ENCODE measurements at regions of chr7 and their contacts with region 1.

Region 1: GRCh38 chr7:151226875-151227782 is at the start of gene ABCF2:
- DNase-seq: peak; percentile 99
- ATAC-seq: peak; percentile 97
- H3K4me3 ChIP-seq: peak within 1 kb of the TSS; percentile 85
- H3K27ac ChIP-seq: peak within 1 kb of the TSS; percentile 92
- H3K4me1 ChIP-seq: peaks cover 11% of the 10 kb centered on the region
- H3K27me3 ChIP-seq: no peaks in the 10 kb centered on the region
- CTCF ChIP-seq: no peak
- POLR2A ChIP-seq: peak; percentile 77
- RAD21 ChIP-seq: no peak
- total RNA-seq, gene ABCF2: 100 and 103 TPM in 2 replicates

Region 2: GRCh38 chr7:151211155-151211772 is 15.9 kb before region 1 on chr7:
- CTCF ChIA-PET with region 1: no interaction called
- POLR2A ChIA-PET with region 1: interaction called, 11 read pairs
- dilution Hi-C with region 1: no loop called
- in situ Hi-C with region 1: no loop called
- intact Hi-C with region 1: no loop called
- DNase-seq: no peak
- ATAC-seq: no peak
- H3K4me3 ChIP-seq: no peak overlapping the region
- H3K27ac ChIP-seq: no peak overlapping the region
- H3K4me1 ChIP-seq: no peaks in the 10 kb centered on the region
- H3K27me3 ChIP-seq: peaks cover 19% of the 10 kb centered on the region
- CTCF ChIP-seq: no peak
- POLR2A ChIP-seq: no peak
- RAD21 ChIP-seq: no peak

Region 3: GRCh38 chr7:151261529-151261928 is 34.4 kb after region 1 on chr7:
- CTCF ChIA-PET with region 1: no interaction called
- POLR2A ChIA-PET with region 1: no interaction called
- dilution Hi-C with region 1: no loop called
- in situ Hi-C with region 1: no loop called
- intact Hi-C with region 1: no loop called
- DNase-seq: no peak
- ATAC-seq: no peak
- H3K4me3 ChIP-seq: no peak overlapping the region
- H3K27ac ChIP-seq: no peak overlapping the region
- H3K4me1 ChIP-seq: no peaks in the 10 kb centered on the region
- H3K27me3 ChIP-seq: peaks cover 49% of the 10 kb centered on the region
- CTCF ChIP-seq: no peak
- POLR2A ChIP-seq: no peak
- RAD21 ChIP-seq: no peak